CD14-positive monocyte (primary cell): ENCODE measurements at regions of chr21 and their contacts with region 1.

Region 1: DNA sequence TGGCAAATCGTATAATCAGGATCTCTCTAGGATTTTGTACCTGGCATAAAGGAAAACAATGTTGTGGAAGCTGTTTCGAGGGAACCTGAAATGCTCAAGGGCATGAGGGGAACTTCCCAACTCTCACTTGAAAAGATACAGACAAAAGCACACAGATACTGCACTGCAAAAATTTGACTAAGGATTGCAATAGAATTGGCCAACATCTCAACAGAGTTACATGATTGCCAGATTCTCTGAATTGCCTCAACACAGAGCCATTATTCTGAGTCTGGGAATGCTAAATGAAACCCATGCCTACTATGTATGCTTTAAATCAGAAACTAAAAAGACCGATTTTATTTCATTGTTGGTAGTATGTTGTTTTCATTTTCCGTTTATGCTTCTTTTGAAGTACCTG is 16.0 kb downstream of the KRTAP19-8 start:
- DNase-seq: no peak
- H3K4me3 ChIP-seq: no peak overlapping the region
- H3K4me3 Mint-ChIP-seq: no peak overlapping the region
- H3K27ac ChIP-seq: no peak overlapping the region
- H3K27ac Mint-ChIP-seq: no peak overlapping the region
- H3K4me1 ChIP-seq: no peaks in the 10 kb centered on the region
- H3K4me1 Mint-ChIP-seq: no peaks in the 10 kb centered on the region
- H3K27me3 ChIP-seq: no peaks in the 10 kb centered on the region
- H3K27me3 Mint-ChIP-seq: peaks cover 0 to 4% (median 3%) of the 10 kb centered on the region in 3 donors
- CTCF ChIP-seq: no peak

Region 2: GRCh38 chr21:30962013-30962412 is 60.3 kb before region 1 on chr21:
- intact Hi-C with region 1: loop called in 1 of 2 experiments (anchors 10 kb)
- DNase-seq: no peak
- H3K4me3 ChIP-seq: no peak overlapping the region
- H3K4me3 Mint-ChIP-seq: no peak overlapping the region
- H3K27ac ChIP-seq: no peak overlapping the region
- H3K27ac Mint-ChIP-seq: peak overlapping the region in 1 of 7 donors; percentile 58
- H3K4me1 ChIP-seq: no peaks in the 10 kb centered on the region
- H3K4me1 Mint-ChIP-seq: no peaks in the 10 kb centered on the region
- H3K27me3 ChIP-seq: no peaks in the 10 kb centered on the region
- H3K27me3 Mint-ChIP-seq: no peaks in the 10 kb centered on the region
- CTCF ChIP-seq: no peak

Region 3: DNA sequence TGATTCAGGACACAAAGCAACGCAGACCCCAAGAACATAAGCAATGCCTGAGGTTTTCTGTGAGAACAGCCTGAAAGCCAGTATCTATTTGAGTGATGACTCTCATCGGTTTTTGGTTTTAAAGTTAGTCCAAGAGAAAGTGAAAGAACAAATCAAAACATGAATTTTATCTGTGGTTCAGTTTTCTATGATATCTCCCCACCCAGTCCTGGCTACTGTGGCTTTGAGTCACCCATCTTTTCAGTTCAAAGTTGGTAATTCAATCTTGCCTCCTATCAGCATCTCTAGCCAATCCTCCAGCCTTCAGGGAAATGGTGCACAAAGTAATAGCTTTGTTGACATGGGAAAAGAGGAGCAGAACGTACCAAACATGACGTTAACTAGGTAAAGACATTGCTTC is 56.5 kb after region 1 on chr21:
- intact Hi-C with region 1: no loop called
- DNase-seq: no peak
- H3K4me3 ChIP-seq: no peak overlapping the region
- H3K4me3 Mint-ChIP-seq: no peak overlapping the region
- H3K27ac ChIP-seq: no peak overlapping the region
- H3K27ac Mint-ChIP-seq: no peak overlapping the region
- H3K4me1 ChIP-seq: no peaks in the 10 kb centered on the region
- H3K4me1 Mint-ChIP-seq: no peaks in the 10 kb centered on the region
- H3K27me3 ChIP-seq: no peaks in the 10 kb centered on the region
- H3K27me3 Mint-ChIP-seq: peaks cover 0 to 11% (median 9%) of the 10 kb centered on the region in 3 donors
- CTCF ChIP-seq: no peak

Region 4: DNA sequence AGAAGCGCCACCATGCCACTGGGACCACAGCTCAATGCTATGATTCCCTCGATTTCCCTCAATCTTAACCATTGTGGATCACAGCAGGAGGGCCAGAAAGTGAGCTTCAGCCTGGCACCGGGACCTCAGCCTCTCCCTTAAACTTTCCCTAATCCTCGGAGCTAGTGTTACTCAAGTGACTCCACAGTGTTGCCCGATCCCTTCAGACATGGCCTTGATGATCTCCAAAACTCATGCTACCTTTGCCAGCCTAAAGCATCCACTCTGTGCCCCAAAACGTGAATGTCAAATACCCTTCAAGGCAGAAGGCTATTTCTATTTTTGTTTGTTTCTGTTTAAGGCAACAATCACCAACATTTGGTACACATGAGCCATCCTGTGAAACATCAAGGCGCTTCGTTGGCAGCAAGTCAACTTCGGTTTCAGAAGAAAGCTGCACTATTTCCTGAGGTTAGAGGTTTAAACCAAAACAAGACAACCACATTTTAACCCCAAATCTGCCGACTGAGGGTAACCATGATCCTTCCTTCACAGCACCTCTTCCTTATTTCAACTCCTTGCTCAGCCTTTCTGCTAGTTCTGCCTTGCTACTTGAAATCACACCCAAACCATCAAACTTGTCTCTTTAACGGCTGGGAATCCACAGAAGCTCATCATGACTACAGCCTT is 110.4 kb after region 1 on chr21:
- intact Hi-C with region 1: no loop called
- DNase-seq: peak in 1 of 3 donors; percentile 8
- H3K4me3 ChIP-seq: peak overlapping the region in 1 of 3 experiments; percentile 36
- H3K4me3 Mint-ChIP-seq: peak overlapping the region in 1 of 2 donors; percentile 54
- H3K27ac ChIP-seq: peak overlapping the region in 1 of 2 donors; percentile 67
- H3K27ac Mint-ChIP-seq: peak overlapping the region in 5 of 7 donors; percentile 18 to 80 (median 63)
- H3K4me1 ChIP-seq: peaks cover 25 to 27% of the 10 kb centered on the region in 2 donors
- H3K4me1 Mint-ChIP-seq: peaks cover 37% of the 10 kb centered on the region
- H3K27me3 ChIP-seq: no peaks in the 10 kb centered on the region
- H3K27me3 Mint-ChIP-seq: peaks cover 2 to 5% (median 4%) of the 10 kb centered on the region in 3 donors
- CTCF ChIP-seq: no peak